ENCODE measurements at regions of chr12 and their contacts with region 1.

Region 1: DNA sequence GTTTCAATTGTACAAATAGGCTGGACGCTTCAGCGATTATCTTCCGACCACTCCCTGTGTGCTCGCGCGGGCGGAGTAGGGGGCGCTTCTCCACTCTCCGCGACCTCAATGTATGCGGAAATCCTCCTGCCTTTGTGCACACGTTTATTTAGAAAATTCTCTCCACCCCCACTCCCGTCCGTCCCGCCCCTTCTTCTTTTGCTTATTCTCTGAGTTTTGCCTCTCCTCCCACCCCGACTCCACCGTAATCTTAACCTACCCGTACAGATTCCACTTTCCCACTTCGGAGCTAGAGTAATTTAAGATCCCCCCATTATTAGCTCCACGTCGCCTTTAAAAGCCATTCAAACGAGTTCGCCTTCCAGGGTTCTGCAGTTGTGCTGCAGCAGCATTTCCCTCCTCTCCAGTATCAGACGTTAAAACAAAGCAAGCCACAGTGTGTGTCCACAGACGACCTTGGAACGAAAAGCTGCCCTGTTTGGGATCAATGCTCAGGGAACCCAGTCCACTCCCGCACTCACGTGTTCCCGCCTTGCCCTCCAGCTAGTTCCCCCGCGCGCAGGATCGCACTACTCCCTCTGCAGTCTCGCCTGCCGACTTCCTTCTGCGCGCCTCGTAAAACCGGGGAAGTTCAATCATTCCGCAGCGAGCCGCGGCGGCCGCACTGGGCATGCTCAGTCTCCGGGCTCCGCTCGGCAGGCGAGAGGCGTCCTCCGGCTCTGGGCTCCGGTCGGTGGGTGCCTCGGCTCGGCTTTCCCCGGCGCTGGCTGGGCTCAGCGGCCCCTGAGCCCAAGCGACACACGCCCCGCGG is at the start of gene ANO6:
- DNase-seq: peak; percentile 88
- H3K4me3 Mint-ChIP-seq: peak within 1 kb of the TSS; percentile 89
- H3K27ac Mint-ChIP-seq: peak within 1 kb of the TSS; percentile 99
- H3K4me1 Mint-ChIP-seq: peaks cover 21% of the 10 kb centered on the region
- H3K27me3 Mint-ChIP-seq: no peaks in the 10 kb centered on the region
- CTCF ChIP-seq: no peak
- total RNA-seq, gene ANO6: 25.4 and 31.8 TPM in 2 replicates

Region 2: GRCh38 chr12:44942714-44943113 is 272.9 kb before region 1 on chr12:
- CTCF ChIA-PET with region 1: no interaction called
- POLR2A ChIA-PET with region 1: no interaction called
- intact Hi-C with region 1: no loop called
- DNase-seq: no peak
- H3K4me3 Mint-ChIP-seq: no peak overlapping the region
- H3K27ac Mint-ChIP-seq: no peak overlapping the region
- H3K4me1 Mint-ChIP-seq: no peaks in the 10 kb centered on the region
- H3K27me3 Mint-ChIP-seq: peaks cover 48% of the 10 kb centered on the region
- CTCF ChIP-seq: no peak

Region 3: DNA sequence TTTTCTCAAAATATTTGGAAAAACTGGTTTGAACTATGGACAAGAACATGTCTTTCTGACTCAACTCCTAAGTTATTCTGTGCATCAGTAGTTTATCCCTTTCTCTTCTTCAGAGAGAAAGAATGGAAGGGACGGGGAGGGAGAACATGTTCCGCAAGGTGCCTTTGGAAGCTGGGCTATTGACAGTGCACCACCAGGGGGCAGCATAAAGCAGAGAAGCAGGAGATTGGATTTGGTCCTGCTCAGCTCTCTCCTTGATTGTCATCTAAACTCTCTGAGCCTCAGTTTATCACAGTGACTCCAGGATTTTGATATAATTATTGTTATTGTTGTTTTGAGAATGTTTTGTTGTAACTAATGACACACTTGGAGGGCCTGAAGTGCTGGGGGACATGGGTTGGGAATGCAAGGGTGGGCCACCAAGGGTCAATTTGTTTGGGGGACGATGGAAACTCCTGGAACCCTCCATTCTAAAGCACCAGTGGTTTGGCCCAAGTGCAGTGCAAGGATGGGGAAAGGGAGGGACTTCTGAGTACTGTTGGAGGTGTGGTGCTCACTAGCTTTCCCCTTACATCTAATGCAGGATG is 45.1 kb before region 1 on chr12:
- CTCF ChIA-PET with region 1: interaction called, 5 read pairs
- POLR2A ChIA-PET with region 1: no interaction called
- intact Hi-C with region 1: loop called (anchors 2 kb)
- DNase-seq: peak; percentile 84
- H3K4me3 Mint-ChIP-seq: no peak overlapping the region
- H3K27ac Mint-ChIP-seq: no peak overlapping the region
- H3K4me1 Mint-ChIP-seq: no peaks in the 10 kb centered on the region
- H3K27me3 Mint-ChIP-seq: no peaks in the 10 kb centered on the region
- CTCF ChIP-seq: peak; percentile 85

Region 4: DNA sequence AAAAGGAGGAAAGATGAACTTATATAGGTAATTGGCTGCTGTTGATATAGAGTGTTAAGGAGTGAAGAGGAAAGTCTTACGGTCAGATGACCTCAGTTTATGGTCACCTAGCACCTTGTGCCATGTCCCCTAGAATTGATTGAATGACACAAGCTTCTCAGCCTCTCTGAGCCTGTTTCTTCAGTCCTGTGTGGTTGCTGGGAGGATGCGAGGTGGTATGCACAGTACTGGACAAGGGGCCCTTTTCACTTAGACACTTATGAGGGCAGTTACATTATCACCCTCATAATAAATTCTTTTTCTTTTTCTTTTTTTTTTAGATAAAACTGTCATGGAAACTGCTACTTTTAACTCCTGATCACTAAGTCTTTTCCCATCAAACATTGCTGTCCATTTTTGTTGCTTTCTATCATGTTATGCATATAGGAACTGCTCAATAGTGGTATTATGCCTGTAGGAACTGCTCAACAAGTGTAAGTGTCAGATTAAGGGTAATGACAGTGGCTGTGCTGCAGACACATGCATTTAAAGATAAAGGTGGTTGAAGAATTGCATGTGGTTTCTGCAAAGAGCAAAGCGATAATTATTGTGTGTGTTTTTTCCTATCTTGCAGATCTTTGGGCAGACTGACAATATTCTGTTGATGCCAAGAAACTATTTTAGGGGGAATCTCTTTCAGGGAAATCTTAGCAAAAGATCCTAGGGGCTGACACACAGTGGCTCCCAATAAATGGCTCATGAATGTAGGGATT is 11.9 kb after region 1 on chr12:
- CTCF ChIA-PET with region 1: interaction called, 22 read pairs
- POLR2A ChIA-PET with region 1: interaction called, 192 read pairs
- intact Hi-C with region 1: no loop called
- DNase-seq: no peak
- H3K4me3 Mint-ChIP-seq: no peak overlapping the region
- H3K27ac Mint-ChIP-seq: no peak overlapping the region
- H3K4me1 Mint-ChIP-seq: peaks cover 15% of the 10 kb centered on the region
- H3K27me3 Mint-ChIP-seq: no peaks in the 10 kb centered on the region
- CTCF ChIP-seq: no peak

Region 5: DNA sequence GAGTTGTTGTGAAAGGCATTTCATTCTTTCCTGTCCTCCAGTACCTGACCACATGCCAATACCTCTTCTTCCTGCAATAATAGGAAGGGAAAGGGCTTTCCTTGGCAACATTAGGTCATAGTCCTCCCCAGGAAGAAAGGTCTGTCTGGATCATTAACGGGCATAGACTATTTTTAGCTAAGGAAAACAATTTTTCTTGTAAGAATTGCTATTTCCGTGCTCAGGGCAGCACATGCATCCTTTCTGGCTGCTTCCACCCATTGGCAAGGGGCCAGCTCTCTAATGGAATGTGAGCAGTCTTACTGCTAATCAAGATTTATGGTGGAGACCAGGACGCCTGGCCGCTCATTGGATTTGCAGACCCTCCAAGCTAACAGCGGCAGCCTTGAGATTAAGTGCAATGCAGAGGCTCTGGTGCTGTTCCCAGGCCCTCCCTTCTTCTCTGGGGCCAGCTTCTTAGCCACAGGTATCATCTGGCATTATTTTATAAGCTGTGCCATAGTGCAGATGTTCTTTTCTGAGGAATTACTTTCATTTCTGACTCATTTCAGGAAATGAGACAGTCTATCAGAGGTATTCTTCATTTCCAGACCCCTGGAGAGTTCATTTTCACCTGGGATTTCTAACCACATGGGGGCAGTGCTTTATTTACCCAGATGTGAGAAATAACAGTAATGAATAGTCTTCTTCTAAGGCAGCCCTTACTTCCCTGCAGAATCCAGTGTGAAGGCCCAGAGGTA is 53.2 kb after region 1 on chr12:
- CTCF ChIA-PET with region 1: interaction called, 6 read pairs
- POLR2A ChIA-PET with region 1: interaction called, 28 read pairs
- intact Hi-C with region 1: loop called (anchors 1 kb)
- DNase-seq: peak; percentile 89
- H3K4me3 Mint-ChIP-seq: peak overlapping the region; percentile 58
- H3K27ac Mint-ChIP-seq: peak overlapping the region; percentile 61
- H3K4me1 Mint-ChIP-seq: peaks cover 21% of the 10 kb centered on the region
- H3K27me3 Mint-ChIP-seq: no peaks in the 10 kb centered on the region
- CTCF ChIP-seq: peak; percentile 63

Region 6: DNA sequence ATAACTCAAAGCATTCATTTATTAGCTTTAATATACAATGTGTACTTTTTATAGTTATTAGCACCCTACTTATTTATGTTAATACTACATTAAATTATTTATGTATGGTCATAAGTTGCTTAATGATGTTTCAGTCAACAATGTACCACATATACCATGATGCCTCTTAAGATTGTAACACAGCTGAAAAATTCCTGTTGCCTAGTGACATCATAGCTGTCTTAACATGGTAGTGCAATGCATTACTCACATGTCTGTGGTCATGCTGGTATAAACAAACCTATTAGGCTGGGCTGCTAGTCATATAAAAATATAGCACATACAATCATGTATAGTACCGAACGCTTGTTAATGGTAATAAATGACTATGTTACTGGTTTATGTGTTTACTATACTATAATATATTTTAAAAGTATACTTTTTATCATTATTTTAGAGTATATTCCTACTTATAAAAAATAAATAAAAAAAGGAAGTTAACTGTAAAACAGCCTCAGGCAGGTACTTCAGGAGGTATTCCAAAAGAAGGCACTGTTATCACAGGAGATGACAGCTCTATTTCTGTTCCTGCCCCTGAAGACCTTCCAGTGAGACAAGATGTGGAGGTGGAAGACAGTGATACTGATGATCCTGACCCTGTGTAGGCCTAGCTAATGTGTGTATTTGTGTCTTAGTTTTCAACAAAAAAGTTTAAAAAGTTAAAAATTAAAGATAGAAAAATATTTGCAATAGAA is 120.9 kb after region 1 on chr12:
- CTCF ChIA-PET with region 1: interaction called, 4 read pairs
- POLR2A ChIA-PET with region 1: interaction called, 36 read pairs
- intact Hi-C with region 1: loop called (anchors 2 kb)
- DNase-seq: peak; percentile 77
- H3K4me3 Mint-ChIP-seq: no peak overlapping the region
- H3K27ac Mint-ChIP-seq: no peak overlapping the region
- H3K4me1 Mint-ChIP-seq: peaks cover 18% of the 10 kb centered on the region
- H3K27me3 Mint-ChIP-seq: no peaks in the 10 kb centered on the region
- CTCF ChIP-seq: no peak

Region 7: GRCh38 chr12:45388545-45388944 is 172.9 kb after region 1 on chr12:
- CTCF ChIA-PET with region 1: interaction called, 13 read pairs
- POLR2A ChIA-PET with region 1: interaction called, 3 read pairs
- intact Hi-C with region 1: loop called (anchors 2 kb)
- DNase-seq: peak; percentile 48
- H3K4me3 Mint-ChIP-seq: no peak overlapping the region
- H3K27ac Mint-ChIP-seq: no peak overlapping the region
- H3K4me1 Mint-ChIP-seq: no peaks in the 10 kb centered on the region
- H3K27me3 Mint-ChIP-seq: no peaks in the 10 kb centered on the region
- CTCF ChIP-seq: peak; percentile 50